Right cardiac atrium (tissue), 5 donors: ENCODE measurements at regions of chr19 and their contacts with region 1.

Region 1: GRCh38 chr19:2064788-2065524 is 13.9 kb upstream of the MKNK2 start:
- DNase-seq: peak; percentile 62 to 87 (median 83)
- ATAC-seq: peak; percentile 34 to 37
- H3K4me3 ChIP-seq: no peak overlapping the region
- H3K27ac ChIP-seq: peak overlapping the region; percentile 75
- H3K4me1 ChIP-seq: peaks cover 6% of the 10 kb centered on the region
- H3K27me3 ChIP-seq: no peaks in the 10 kb centered on the region

Region 2: DNA sequence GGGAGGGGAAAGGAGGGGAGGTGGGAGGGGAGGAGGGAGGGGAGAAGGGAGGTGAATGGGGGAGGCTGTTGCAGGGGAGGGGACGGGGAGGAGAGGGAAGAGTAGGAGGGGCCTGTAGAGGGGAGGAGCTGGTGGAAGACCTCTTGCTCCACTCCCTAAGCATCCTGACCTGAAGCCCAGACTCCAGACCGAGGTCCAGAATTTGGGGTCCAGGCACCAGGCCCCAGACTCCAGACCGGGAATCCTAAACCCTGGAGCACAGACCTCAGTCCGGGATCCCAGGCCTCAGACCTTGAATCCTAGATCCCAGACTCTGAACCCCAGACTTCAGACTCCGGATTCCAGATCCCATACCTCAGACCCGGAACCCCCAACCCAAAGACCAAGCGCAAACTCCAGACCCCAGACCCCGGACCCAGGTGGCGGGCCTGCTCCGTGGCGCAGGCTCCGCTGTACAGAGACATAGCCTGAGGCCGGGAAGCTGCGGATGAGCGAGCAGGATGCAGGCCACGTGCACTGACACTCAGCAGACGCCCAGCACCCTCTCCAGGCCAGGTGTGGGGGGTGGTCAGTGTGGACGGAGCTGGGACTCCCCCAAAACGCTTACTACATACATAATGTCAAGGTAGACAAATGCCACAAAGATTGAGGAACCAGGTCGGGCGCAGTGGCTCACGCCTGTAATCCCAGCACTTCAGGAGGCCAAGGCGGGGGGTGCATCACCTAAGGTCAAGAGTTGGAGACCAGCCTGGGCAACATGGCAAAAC is 48.7 kb before region 1 on chr19:
- intact Hi-C with region 1: loop called (anchors 2 to 5 kb)
- DNase-seq: peak; percentile 84 to 91 (median 87)
- ATAC-seq: peak; percentile 84 to 89
- H3K4me3 ChIP-seq: peak overlapping the region; percentile 12
- H3K27ac ChIP-seq: peak overlapping the region; percentile 47
- H3K4me1 ChIP-seq: peaks cover 2% of the 10 kb centered on the region
- H3K27me3 ChIP-seq: no peaks in the 10 kb centered on the region

Region 3: GRCh38 chr19:2021453-2022140 is 43.4 kb before region 1 on chr19:
- intact Hi-C with region 1: loop called (anchors 2 to 5 kb)
- DNase-seq: no peak
- ATAC-seq: no peak
- H3K4me3 ChIP-seq: no peak overlapping the region
- H3K27ac ChIP-seq: no peak overlapping the region
- H3K4me1 ChIP-seq: no peaks in the 10 kb centered on the region
- H3K27me3 ChIP-seq: no peaks in the 10 kb centered on the region